ENCODE measurements at regions of chr4 and their contacts with region 1.

Region 1: GRCh38 chr4:86924811-86925210 is 10.0 kb upstream of the AFF1 start:
- DNase-seq: no peak
- H3K4me3 ChIP-seq: no peak overlapping the region
- H3K27ac ChIP-seq: no peak overlapping the region
- H3K4me1 ChIP-seq: no peaks in the 10 kb centered on the region
- H3K27me3 ChIP-seq: no peaks in the 10 kb centered on the region
- CTCF ChIP-seq: no peak
- POLR2A ChIP-seq: no peak

Region 2: DNA sequence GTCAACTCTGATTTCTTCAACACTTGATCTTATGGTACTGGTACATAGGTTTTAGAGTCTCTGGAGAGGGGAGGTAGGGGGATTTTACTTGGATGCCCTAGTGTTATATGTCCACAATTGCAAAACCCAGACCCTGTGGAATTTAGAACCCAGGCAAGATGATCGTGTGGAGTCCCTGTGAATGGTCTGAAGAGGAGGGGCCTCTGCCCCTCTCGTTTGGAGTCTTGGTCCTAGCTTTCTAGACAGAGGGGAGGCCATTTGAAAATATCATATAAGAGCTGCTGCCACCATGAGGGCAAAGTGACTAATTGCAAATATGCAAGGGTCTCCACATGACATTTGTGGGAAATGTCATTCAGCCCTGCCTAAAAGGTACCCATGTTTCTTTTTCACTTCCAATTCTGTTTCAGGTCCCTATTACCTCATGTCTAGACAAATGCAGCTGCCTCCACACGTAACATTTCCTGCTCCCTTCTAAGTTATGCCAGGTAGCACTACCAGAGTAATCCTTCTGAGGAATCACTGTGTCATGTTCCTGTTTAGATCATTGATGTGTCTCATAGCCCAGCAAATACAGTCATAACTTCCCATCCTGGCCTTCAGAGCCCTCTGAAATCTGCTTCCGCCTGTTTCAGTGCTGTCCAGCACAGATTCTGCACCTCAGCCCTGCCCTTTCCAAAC is 168.8 kb after region 1 on chr4:
- intact Hi-C with region 1: loop called (anchors 2 kb)
- DNase-seq: peak; percentile 25
- H3K4me3 ChIP-seq: no peak overlapping the region
- H3K27ac ChIP-seq: peak overlapping the region in 1 of 2 donors; percentile 28
- H3K4me1 ChIP-seq: peaks cover 14% of the 10 kb centered on the region
- H3K27me3 ChIP-seq: no peaks in the 10 kb centered on the region
- CTCF ChIP-seq: peak; percentile 14 to 70 (median 52)
- POLR2A ChIP-seq: no peak

Region 3: DNA sequence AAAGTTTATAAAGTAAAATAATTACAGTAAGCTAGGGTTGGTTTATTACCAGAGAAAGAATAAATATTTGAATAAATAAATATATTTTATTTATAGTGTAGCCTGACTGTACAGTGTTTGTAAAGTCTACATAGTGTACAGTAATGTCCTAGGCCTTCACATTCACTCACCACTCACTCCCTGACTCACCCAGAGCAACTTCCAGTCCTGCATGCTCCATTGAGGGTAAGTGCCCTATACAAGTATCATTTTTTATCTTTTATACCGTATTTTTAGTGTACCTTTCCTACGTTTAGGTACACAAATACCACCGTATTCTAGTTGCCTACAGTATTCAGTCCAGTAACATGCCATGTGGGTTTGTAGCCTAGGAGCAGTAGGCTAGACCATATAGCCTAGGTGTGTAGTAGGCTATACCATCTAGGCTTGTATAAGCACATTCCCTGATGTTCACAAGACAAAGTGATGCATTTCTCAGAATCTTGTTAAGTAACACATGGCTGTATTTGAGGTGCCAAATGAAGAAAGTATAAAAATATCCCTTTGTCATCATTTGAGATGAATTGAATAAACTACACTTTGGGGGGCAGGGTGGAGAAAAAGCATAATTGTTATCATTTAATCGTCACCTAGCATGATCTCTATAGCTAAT is 310.3 kb after region 1 on chr4:
- intact Hi-C with region 1: loop called (anchors 5 kb)
- DNase-seq: no peak
- H3K4me3 ChIP-seq: peak overlapping the region; percentile 18 to 23
- H3K27ac ChIP-seq: no peak overlapping the region
- H3K4me1 ChIP-seq: no peaks in the 10 kb centered on the region
- H3K27me3 ChIP-seq: no peaks in the 10 kb centered on the region
- CTCF ChIP-seq: no peak
- POLR2A ChIP-seq: no peak

Measured in prostate gland (tissue), 2 donors.